Posterior vena cava (tissue), 2 donors: ENCODE measurements at regions of chr9 and their contacts with region 1.

Region 1: GRCh38 chr9:3777137-3777536 is 251.3 kb upstream of the RFX3 start:
- DNase-seq: no peak

Region 2: GRCh38 chr9:3662671-3663070 is 114.5 kb before region 1 on chr9:
- intact Hi-C with region 1: no loop called
- DNase-seq: no peak

Region 3: GRCh38 chr9:3719286-3719685 is 57.9 kb before region 1 on chr9:
- intact Hi-C with region 1: no loop called
- DNase-seq: no peak

Region 4: GRCh38 chr9:3751125-3751758 is 25.9 kb before region 1 on chr9:
- intact Hi-C with region 1: loop called in 1 of 2 experiments (anchors 1 kb)
- DNase-seq: no peak

Region 5: DNA sequence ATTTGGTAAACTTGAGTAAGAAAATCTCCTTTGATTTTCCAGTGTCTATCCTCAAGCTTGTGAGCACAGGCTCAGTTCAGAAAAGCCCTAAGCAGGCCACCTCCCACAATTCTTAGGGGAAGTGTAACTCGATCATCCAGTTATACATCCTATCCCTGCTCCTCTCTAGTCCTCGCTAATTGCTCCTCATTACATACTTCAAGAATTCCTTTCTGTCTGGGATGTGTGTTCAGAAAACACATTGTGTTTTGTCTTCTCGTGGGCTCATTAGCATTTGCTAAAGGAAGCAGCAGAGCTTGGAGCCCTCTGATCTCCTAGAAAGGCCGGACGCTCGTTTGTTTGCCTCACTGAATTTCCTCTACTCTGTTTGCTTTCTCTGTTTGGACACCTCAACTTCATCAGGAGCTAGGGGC is 16.8 kb after region 1 on chr9:
- intact Hi-C with region 1: no loop called
- DNase-seq: no peak